CD4-positive, alpha-beta T cell (primary cell): ENCODE measurements at regions of chr3 and their contacts with region 1.

Region 1: GRCh38 chr3:170307671-170308403 is 49.7 kb upstream of the SKIL start:
- DNase-seq: no peak
- ATAC-seq: no peak
- H3K4me3 ChIP-seq: no peak overlapping the region
- H3K4me3 Mint-ChIP-seq: no peak overlapping the region
- H3K27ac ChIP-seq: no peak overlapping the region
- H3K27ac Mint-ChIP-seq: no peak overlapping the region
- H3K4me1 ChIP-seq: no peaks in the 10 kb centered on the region
- H3K4me1 Mint-ChIP-seq: no peaks in the 10 kb centered on the region
- H3K27me3 ChIP-seq: no peaks in the 10 kb centered on the region
- H3K27me3 Mint-ChIP-seq: no peaks in the 10 kb centered on the region
- CTCF ChIP-seq: no peak

Region 2: GRCh38 chr3:170296703-170297102 is 11.1 kb before region 1 on chr3:
- CTCF ChIA-PET with region 1: no interaction called
- POLR2A ChIA-PET with region 1: no interaction called
- intact Hi-C with region 1: no loop called
- DNase-seq: no peak
- ATAC-seq: no peak
- H3K4me3 ChIP-seq: no peak overlapping the region
- H3K4me3 Mint-ChIP-seq: no peak overlapping the region
- H3K27ac ChIP-seq: no peak overlapping the region
- H3K27ac Mint-ChIP-seq: no peak overlapping the region
- H3K4me1 ChIP-seq: no peaks in the 10 kb centered on the region
- H3K4me1 Mint-ChIP-seq: no peaks in the 10 kb centered on the region
- H3K27me3 ChIP-seq: no peaks in the 10 kb centered on the region
- H3K27me3 Mint-ChIP-seq: no peaks in the 10 kb centered on the region
- CTCF ChIP-seq: no peak

Region 3: GRCh38 chr3:170368921-170369320 is 61.1 kb after region 1 on chr3:
- CTCF ChIA-PET with region 1: no interaction called
- POLR2A ChIA-PET with region 1: no interaction called
- intact Hi-C with region 1: loop called in 1 of 2 experiments (anchors 1 kb)
- DNase-seq: peak in 3 of 14 experiments; percentile 23 to 40 (median 30)
- ATAC-seq: no peak
- H3K4me3 ChIP-seq: no peak overlapping the region
- H3K4me3 Mint-ChIP-seq: no peak overlapping the region
- H3K27ac ChIP-seq: no peak overlapping the region
- H3K27ac Mint-ChIP-seq: no peak overlapping the region
- H3K4me1 ChIP-seq: peaks cover 5% of the 10 kb centered on the region
- H3K4me1 Mint-ChIP-seq: peaks cover 43% of the 10 kb centered on the region
- H3K27me3 ChIP-seq: no peaks in the 10 kb centered on the region
- H3K27me3 Mint-ChIP-seq: no peaks in the 10 kb centered on the region
- CTCF ChIP-seq: peak; percentile 48

Region 4: DNA sequence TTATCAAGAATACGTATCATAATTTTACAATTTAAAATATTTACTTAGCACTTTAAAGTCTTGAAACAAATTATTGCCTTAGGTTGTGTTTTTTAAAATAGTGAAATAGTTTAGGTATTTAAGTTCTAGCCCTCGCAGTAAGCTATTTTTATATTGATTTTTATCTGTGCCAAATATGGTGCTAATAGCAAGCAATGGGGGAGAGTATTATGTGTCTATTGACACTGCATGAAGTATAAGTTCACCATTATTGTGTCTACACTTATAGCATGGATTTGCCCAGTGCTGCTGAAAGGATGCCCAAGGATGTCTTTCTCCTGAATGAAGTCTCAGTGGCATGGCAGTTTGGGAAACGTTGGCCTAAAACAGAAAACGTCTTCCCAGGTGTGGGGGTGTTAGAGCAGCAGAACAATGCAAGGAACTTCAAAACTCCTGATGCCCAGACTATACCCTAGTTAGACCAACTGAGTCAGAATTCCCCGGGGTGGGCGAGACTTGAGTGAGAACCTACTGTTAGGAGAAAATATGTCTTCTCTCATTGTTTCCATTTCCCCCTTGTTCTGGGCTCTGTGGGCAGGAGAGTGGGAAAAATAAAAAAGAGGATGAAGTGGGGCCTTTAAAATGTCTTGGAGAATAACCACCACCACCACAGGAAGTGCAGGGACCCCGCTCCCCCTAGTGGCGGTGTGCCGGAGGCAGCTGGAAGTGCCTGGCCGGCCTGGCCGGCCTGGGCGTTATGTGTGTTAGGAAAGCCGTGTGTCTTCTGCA is 382.2 kb after region 1 on chr3:
- CTCF ChIA-PET with region 1: no interaction called
- POLR2A ChIA-PET with region 1: no interaction called
- intact Hi-C with region 1: loop called in 1 of 2 experiments (anchors 5 kb)
- DNase-seq: peak; percentile 1 to 53 (median 18)
- ATAC-seq: no peak
- H3K4me3 ChIP-seq: no peak overlapping the region
- H3K4me3 Mint-ChIP-seq: no peak overlapping the region
- H3K27ac ChIP-seq: no peak overlapping the region
- H3K27ac Mint-ChIP-seq: no peak overlapping the region
- H3K4me1 ChIP-seq: no peaks in the 10 kb centered on the region
- H3K4me1 Mint-ChIP-seq: no peaks in the 10 kb centered on the region
- H3K27me3 ChIP-seq: no peaks in the 10 kb centered on the region
- H3K27me3 Mint-ChIP-seq: no peaks in the 10 kb centered on the region
- CTCF ChIP-seq: peak; percentile 57

Region 5: GRCh38 chr3:170811928-170812591 is 504.2 kb after region 1 on chr3:
- CTCF ChIA-PET with region 1: no interaction called
- POLR2A ChIA-PET with region 1: no interaction called
- intact Hi-C with region 1: loop called (anchors 1 to 2 kb)
- DNase-seq: peak; percentile 39 to 80 (median 54)
- ATAC-seq: peak; percentile 96
- H3K4me3 ChIP-seq: no peak overlapping the region
- H3K4me3 Mint-ChIP-seq: no peak overlapping the region
- H3K27ac ChIP-seq: no peak overlapping the region
- H3K27ac Mint-ChIP-seq: no peak overlapping the region
- H3K4me1 ChIP-seq: no peaks in the 10 kb centered on the region
- H3K4me1 Mint-ChIP-seq: no peaks in the 10 kb centered on the region
- H3K27me3 ChIP-seq: no peaks in the 10 kb centered on the region
- H3K27me3 Mint-ChIP-seq: no peaks in the 10 kb centered on the region
- CTCF ChIP-seq: peak; percentile 87

Region 6: GRCh38 chr3:171225708-171226107 is 917.9 kb after region 1 on chr3:
- CTCF ChIA-PET with region 1: no interaction called
- POLR2A ChIA-PET with region 1: no interaction called
- intact Hi-C with region 1: no loop called
- DNase-seq: no peak
- ATAC-seq: no peak
- H3K4me3 ChIP-seq: no peak overlapping the region
- H3K4me3 Mint-ChIP-seq: no peak overlapping the region
- H3K27ac ChIP-seq: no peak overlapping the region
- H3K27ac Mint-ChIP-seq: peak overlapping the region; percentile 80
- H3K4me1 ChIP-seq: peaks cover 2% of the 10 kb centered on the region
- H3K4me1 Mint-ChIP-seq: peaks cover 56% of the 10 kb centered on the region
- H3K27me3 ChIP-seq: no peaks in the 10 kb centered on the region
- H3K27me3 Mint-ChIP-seq: no peaks in the 10 kb centered on the region
- CTCF ChIP-seq: no peak